AG04450 (cell line): ENCODE measurements at regions of chr5 and their contacts with region 1.

Region 1: GRCh38 chr5:54517174-54518092 is at the start of gene SNX18:
- DNase-seq: peak; percentile 86
- H3K4me3 ChIP-seq: peak within 1 kb of the TSS; percentile 68
- H3K27ac ChIP-seq: peak within 1 kb of the TSS; percentile 73
- H3K27me3 ChIP-seq: no peaks in the 10 kb centered on the region
- CTCF ChIP-seq: peak; percentile 92
- polyA plus RNA-seq, gene SNX18: 68.1 and 74.1 TPM in 2 replicates

Region 2: DNA sequence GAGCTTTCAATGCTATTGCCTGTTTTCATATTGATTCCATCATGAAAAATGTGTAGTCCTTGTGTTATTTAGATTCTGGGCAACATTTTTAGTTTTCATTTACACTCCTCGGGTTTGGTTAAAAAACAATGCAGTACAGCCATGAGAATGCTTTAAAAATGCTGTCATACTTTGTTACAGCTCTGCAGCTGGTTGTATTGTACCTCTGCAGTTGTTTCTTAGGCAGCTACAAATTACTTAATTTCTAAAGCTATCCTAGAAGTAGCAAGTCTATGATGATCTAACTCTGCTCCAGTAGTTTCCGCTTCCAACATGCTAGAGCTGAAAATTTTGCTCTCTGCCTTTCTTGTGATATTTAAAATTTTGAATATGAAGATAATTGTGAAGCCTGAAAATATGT is 20.3 kb after region 1 on chr5:
- CTCF ChIA-PET with region 1: no interaction called
- POLR2A ChIA-PET with region 1: no interaction called
- DNase-seq: no peak
- H3K4me3 ChIP-seq: no peak overlapping the region
- H3K27ac ChIP-seq: no peak overlapping the region
- H3K27me3 ChIP-seq: no peaks in the 10 kb centered on the region
- CTCF ChIP-seq: no peak

Region 3: GRCh38 chr5:54630738-54631359 is 113.4 kb after region 1 on chr5:
- CTCF ChIA-PET with region 1: no interaction called
- POLR2A ChIA-PET with region 1: no interaction called
- DNase-seq: no peak
- H3K4me3 ChIP-seq: no peak overlapping the region
- H3K27ac ChIP-seq: no peak overlapping the region
- H3K27me3 ChIP-seq: no peaks in the 10 kb centered on the region
- CTCF ChIP-seq: no peak

Region 4: GRCh38 chr5:54761213-54761701 is 243.8 kb after region 1 on chr5:
- CTCF ChIA-PET with region 1: interaction called, 5 read pairs
- POLR2A ChIA-PET with region 1: interaction called, 13 read pairs
- DNase-seq: peak; percentile 82
- H3K4me3 ChIP-seq: no peak overlapping the region
- H3K27ac ChIP-seq: peak overlapping the region; percentile 94
- H3K27me3 ChIP-seq: no peaks in the 10 kb centered on the region
- CTCF ChIP-seq: no peak

Region 5: GRCh38 chr5:54852007-54852406 is 334.6 kb after region 1 on chr5:
- CTCF ChIA-PET with region 1: interaction called, 14 read pairs
- POLR2A ChIA-PET with region 1: no interaction called
- DNase-seq: no peak
- H3K4me3 ChIP-seq: no peak overlapping the region
- H3K27ac ChIP-seq: no peak overlapping the region
- H3K27me3 ChIP-seq: no peaks in the 10 kb centered on the region
- CTCF ChIP-seq: no peak; the same call in 1 of the 2 replicates

Region 6: GRCh38 chr5:54867310-54867944 is 350.0 kb after region 1 on chr5:
- CTCF ChIA-PET with region 1: interaction called, 58 read pairs
- POLR2A ChIA-PET with region 1: interaction called, 5 read pairs
- DNase-seq: no peak
- H3K4me3 ChIP-seq: no peak overlapping the region
- H3K27ac ChIP-seq: no peak overlapping the region
- H3K27me3 ChIP-seq: peaks cover 6% of the 10 kb centered on the region
- CTCF ChIP-seq: peak; percentile 62

Region 7: GRCh38 chr5:54905943-54906537 is 388.6 kb after region 1 on chr5:
- CTCF ChIA-PET with region 1: interaction called, 13 read pairs
- POLR2A ChIA-PET with region 1: interaction called, 8 read pairs
- DNase-seq: peak; percentile 59
- H3K4me3 ChIP-seq: no peak overlapping the region
- H3K27ac ChIP-seq: no peak overlapping the region
- H3K27me3 ChIP-seq: no peaks in the 10 kb centered on the region
- CTCF ChIP-seq: peak; percentile 79